H1 (cell line): ENCODE measurements at regions of chr12 and their contacts with region 1.

Region 1: DNA sequence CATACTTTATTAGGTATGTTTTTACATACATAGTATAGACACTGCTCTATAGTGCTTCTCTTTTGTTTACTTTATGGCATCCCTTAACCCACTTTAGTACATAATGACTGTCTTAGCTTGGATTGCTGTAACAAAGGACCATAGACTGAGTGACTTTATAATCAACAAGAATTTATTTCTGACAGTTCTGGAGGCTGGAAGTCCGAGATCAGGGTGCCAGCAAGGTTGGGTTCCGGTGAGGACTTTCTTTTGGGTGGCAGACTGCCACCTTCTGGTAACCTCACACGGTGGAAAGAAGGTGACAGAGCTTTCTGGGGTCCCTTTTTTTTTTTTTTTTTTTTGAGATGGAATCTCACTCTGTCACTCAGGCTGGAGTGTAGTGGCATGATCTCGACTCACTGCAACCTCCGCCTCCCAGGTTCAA is 48.7 kb upstream of the PPM1H start:
- DNase-seq: peak in 1 of 2 experiments; percentile 2
- H3K4me3 ChIP-seq: no peak overlapping the region
- H3K27ac ChIP-seq: no peak overlapping the region
- H3K4me1 ChIP-seq: no peaks in the 10 kb centered on the region
- H3K27me3 ChIP-seq: no peaks in the 10 kb centered on the region
- CTCF ChIP-seq: peak; percentile 32 to 54 (median 41); a peak in 3 of 4 replicates
- EP300 ChIP-seq: no peak
- POLR2A ChIP-seq: no peak
- RAD21 ChIP-seq: peak; percentile 55 to 68

Region 2: GRCh38 chr12:62995097-62995496 is 11.5 kb after region 1 on chr12:
- CTCF ChIA-PET with region 1: interaction called, 16 read pairs
- POLR2A ChIA-PET with region 1: interaction called, 3 read pairs
- DNase-seq: peak in 1 of 2 experiments; percentile 15
- H3K4me3 ChIP-seq: no peak overlapping the region
- H3K27ac ChIP-seq: no peak overlapping the region
- H3K4me1 ChIP-seq: peaks cover 0 to 5% (median 0%) of the 10 kb centered on the region in 4 experiments; a peak in 1 of 7 replicates
- H3K27me3 ChIP-seq: no peaks in the 10 kb centered on the region; a peak in 1 of 7 replicates
- CTCF ChIP-seq: peak in 2 of 3 experiments; percentile 14 to 37; a peak in 1 of 4 replicates
- EP300 ChIP-seq: no peak
- POLR2A ChIP-seq: no peak
- RAD21 ChIP-seq: peak; percentile 36 to 55; a peak in 3 of 4 replicates

Region 3: GRCh38 chr12:63508543-63508942 is 524.9 kb after region 1 on chr12:
- CTCF ChIA-PET with region 1: no interaction called
- POLR2A ChIA-PET with region 1: no interaction called
- DNase-seq: no peak
- H3K4me3 ChIP-seq: no peak overlapping the region
- H3K27ac ChIP-seq: no peak overlapping the region
- H3K4me1 ChIP-seq: no peaks in the 10 kb centered on the region
- H3K27me3 ChIP-seq: no peaks in the 10 kb centered on the region
- CTCF ChIP-seq: no peak
- EP300 ChIP-seq: no peak
- POLR2A ChIP-seq: no peak
- RAD21 ChIP-seq: no peak